Endothelial cell of umbilical vein (primary cell): ENCODE measurements at regions of chrX and their contacts with region 1.

Region 1: GRCh38 chrX:103063918-103064434 is at the start of gene BEX1:
- DNase-seq: no peak
- H3K4me3 ChIP-seq: peak within 1 kb of the TSS in 1 of 3 experiments; percentile 12
- H3K27ac ChIP-seq: no peak within 1 kb of the TSS
- H3K4me1 ChIP-seq: no peaks in the 10 kb centered on the region
- H3K27me3 ChIP-seq: no peaks in the 10 kb centered on the region
- CTCF ChIP-seq: no peak
- POLR2A ChIP-seq: no peak
- total RNA-seq, gene BEX1: 0.46 TPM in 1 of 2 replicates, not detected in the other

Region 2: GRCh38 chrX:103157496-103158320 is 93.7 kb after region 1 on chrX:
- CTCF ChIA-PET with region 1: no interaction called
- POLR2A ChIA-PET with region 1: no interaction called
- dilution Hi-C with region 1: no loop called
- intact Hi-C with region 1: loop called (anchors 5 kb)
- DNase-seq: peak; percentile 58
- H3K4me3 ChIP-seq: no peak overlapping the region
- H3K27ac ChIP-seq: no peak overlapping the region
- H3K4me1 ChIP-seq: peaks cover 2% of the 10 kb centered on the region
- H3K27me3 ChIP-seq: no peaks in the 10 kb centered on the region
- CTCF ChIP-seq: peak; percentile 33 to 34
- POLR2A ChIP-seq: no peak